ENCODE measurements at regions of chr16 and their contacts with region 1.

Region 1: GRCh38 chr16:87778830-87779579 is 13.2 kb upstream of the KLHDC4 start:
- DNase-seq: peak; percentile 68
- H3K27ac ChIP-seq: peak overlapping the region; percentile 95
- CTCF ChIP-seq: peak; percentile 91

Region 2: DNA sequence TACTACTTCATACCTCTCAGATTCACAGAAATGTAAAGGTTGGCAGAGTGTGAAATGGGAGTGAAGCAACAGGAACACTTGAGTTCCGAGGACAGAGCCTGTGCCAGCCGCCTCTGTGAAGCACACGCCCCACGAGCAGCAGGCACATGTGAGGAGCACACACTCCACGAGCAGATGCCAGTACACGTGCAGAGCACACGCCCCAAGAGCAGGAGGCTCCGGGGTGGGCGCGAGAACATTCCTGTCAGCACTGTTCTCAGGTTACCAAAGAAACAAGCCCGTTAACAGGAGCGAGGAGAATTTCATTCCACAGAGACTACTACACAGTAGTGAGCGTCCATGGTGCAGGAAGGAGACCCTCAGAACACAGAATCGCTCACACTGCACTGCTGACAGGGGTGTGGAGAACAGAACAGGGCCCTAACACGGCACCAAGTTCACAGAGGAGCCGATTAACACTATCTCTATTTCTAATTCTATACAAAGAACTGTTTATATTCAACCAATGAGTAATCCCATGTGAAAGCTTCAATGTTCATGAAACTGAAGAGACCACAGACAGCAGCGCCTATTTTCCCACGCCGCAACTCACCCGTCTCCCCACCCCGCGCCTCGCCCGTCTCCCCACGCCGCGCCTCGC is 53.3 kb before region 1 on chr16:
- CTCF ChIA-PET with region 1: no interaction called
- POLR2A ChIA-PET with region 1: no interaction called
- DNase-seq: no peak
- H3K27ac ChIP-seq: peak overlapping the region; percentile 40; the same call in 1 of the 2 replicates
- CTCF ChIP-seq: no peak

Region 3: DNA sequence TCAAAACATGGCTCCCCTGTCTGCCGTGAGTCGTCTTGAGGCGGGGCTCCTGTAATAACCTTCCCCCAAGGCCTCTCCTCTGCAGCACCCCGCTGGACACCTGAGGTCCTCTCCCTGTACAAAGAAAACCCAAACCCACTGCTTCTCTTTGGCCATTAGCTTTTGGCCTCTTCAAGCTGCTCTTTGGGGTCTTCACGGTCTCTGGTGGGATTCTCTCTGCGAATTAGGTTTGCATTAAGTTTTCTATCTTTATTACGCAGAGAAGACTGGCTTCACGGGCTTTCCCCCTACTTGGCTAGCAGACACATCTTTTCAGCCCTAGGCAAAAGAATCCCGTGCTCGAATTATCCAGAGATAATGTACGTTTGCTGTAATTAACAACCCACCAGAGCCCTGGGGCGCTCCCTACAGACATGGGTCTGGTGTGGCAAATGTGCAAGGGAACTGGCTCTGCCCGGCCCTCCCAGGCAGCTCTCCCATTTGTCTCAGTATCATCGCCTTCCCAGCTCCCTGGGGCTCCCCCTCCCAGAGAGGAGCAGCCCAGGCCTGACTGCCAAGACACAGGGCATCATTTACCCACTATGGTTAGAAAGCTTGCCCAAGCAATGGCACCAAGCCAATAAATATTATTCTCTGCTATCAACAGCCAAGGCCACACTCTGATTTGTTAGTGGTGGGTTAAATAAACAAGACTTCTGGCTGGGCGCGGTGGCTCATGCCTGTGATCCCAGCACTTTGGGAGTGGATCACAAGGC is 11.4 kb after region 1 on chr16:
- CTCF ChIA-PET with region 1: interaction called, 21 read pairs
- POLR2A ChIA-PET with region 1: interaction called, 5 read pairs
- DNase-seq: peak; percentile 85
- H3K27ac ChIP-seq: peak overlapping the region; percentile 100
- CTCF ChIP-seq: no peak

Region 4: DNA sequence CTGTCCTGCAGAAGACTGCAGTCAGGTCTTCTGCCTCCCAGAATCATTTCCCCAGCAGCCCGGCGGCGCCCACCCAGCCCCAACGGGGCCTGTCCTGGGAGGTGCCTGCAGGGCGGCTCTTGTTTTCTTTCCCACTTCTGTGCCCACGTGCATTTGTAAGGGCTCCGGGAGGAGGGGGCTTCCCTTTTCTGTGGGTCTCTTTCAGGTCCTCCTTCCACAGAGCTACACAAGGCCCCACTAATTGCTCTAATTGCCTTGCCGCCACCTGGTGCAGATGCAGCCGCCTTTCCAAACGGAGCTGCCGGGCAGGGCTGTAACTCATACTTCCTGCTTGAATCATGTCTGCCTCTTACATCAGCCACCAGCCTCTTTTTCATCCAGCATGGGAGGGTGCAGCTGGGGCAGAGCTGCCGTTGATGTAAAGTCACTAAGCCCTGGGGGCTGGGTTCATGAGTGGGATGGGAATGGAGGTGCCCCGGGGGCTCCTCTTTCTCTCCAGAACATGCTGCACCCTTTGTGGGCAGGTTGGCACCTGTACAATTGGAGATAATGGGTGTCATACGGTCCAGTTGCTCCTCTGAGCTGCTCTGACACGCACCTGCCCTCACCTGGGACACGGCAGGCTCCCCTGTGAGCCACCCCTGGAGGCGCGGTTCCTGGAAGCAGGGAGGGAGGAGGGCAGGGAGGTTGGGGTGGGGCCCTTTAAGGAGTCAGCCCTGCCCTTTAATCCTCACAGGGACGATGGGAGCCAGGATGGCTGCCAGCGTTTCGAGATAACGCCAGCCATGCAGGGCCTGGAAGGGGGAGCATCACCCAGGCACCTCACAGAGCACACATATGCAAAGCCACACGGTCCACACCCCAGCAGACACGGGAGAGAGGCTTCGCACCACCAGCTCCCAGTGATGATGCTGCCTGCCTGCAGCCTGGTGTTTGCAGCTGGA is 27.9 kb after region 1 on chr16:
- CTCF ChIA-PET with region 1: interaction called, 38 read pairs
- POLR2A ChIA-PET with region 1: no interaction called
- DNase-seq: peak; percentile 98
- H3K27ac ChIP-seq: peak overlapping the region; percentile 100
- CTCF ChIP-seq: no peak

Region 5: GRCh38 chr16:87828071-87828971 is 49.3 kb after region 1 on chr16:
- CTCF ChIA-PET with region 1: interaction called, 37 read pairs
- POLR2A ChIA-PET with region 1: interaction called, 5 read pairs
- DNase-seq: no peak
- H3K27ac ChIP-seq: peak overlapping the region; percentile 98
- CTCF ChIP-seq: no peak

Region 6: DNA sequence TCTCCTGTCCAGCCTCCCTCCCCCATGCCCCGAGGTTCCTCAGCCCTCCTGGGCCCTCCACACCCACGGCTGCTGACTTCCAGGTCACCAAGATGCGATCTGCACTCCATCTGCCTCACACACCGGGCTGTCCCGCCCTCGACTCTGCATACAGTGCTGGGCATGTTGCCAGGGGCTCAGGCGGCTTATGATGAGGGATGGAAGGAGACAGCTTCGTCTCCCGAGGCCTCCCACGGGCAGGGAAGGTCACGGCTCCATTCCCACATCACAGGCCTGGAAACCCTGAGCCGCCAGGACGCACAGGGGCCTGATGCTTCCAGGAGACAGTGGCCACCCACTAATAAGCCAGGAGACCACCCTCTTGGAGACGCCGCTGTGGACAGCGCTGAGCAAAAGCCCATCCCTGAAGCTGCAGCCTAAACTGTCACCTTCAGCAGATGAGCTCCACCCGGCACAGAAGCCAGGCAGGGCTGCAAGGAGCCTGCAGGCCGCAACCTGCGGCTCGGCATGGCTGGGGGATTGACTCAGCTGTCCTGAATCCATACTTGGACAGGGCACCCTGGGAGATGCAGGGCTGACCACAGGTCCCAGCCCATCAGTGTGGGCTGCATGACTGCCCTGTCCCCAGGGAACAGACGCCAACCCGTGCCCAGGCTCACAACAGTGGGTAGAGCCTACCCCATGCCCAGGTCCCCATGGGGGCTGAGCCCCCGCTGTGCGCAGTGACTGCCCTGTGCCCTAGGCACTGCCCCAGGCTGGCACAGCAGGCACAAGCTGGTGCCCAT is 55.8 kb after region 1 on chr16:
- CTCF ChIA-PET with region 1: interaction called, 37 read pairs
- POLR2A ChIA-PET with region 1: interaction called, 5 read pairs
- DNase-seq: no peak
- H3K27ac ChIP-seq: peak overlapping the region; percentile 98
- CTCF ChIP-seq: no peak

Region 7: GRCh38 chr16:87853411-87854052 is 74.5 kb after region 1 on chr16:
- CTCF ChIA-PET with region 1: interaction called, 19 read pairs
- POLR2A ChIA-PET with region 1: interaction called, 6 read pairs
- DNase-seq: peak; percentile 95
- H3K27ac ChIP-seq: peak overlapping the region; percentile 98
- CTCF ChIP-seq: no peak

Region 8: DNA sequence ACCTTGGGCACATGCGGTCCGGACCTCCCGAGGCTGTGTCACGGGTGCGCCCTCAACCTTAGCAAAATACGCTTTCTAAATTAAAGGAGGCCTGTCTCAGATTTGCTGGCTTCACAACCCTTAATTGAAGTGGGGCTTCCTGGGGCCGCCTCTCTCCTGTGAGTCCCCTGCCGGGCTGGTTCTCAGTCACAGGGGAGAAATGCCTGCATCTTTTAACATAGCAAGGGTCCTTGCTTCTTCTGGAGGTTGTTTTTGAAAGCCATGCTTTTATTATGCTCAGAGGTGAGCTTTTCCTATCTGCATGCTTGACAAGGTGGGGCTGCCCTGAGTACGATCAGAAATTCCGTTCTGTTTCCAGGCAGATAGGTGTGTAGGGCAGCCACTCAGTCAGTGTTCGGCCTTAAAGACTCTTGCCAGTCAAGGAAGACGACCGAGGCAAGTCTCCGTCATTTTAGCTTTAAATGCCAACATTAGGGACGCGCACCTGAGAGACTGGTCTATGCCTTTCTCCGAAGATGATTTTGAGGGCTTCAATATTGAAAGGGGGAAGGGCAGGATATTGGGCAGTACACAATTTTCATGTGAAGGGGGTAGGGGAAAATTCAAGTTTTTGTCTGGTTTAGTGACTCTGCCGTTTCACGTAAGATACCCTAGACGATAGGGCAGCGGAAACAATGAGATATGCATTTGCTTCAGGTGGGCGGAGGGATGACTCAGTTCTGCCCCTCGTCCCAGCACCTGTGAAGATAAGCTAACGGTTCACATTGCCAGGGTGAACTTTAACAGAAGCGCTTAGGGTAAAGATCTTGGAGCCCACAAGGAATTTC is 95.8 kb after region 1 on chr16:
- CTCF ChIA-PET with region 1: interaction called, 53 read pairs
- POLR2A ChIA-PET with region 1: no interaction called
- DNase-seq: no peak
- H3K27ac ChIP-seq: no peak overlapping the region
- CTCF ChIP-seq: no peak